AG04449 (cell line): ENCODE measurements at regions of chr6 and their contacts with region 1.

Region 1: GRCh38 chr6:113994918-113995342 is 24.0 kb upstream of the HDAC2 start:
- DNase-seq: peak; percentile 73
- H3K4me3 ChIP-seq: no peak overlapping the region
- CTCF ChIP-seq: peak; percentile 77

Region 2: DNA sequence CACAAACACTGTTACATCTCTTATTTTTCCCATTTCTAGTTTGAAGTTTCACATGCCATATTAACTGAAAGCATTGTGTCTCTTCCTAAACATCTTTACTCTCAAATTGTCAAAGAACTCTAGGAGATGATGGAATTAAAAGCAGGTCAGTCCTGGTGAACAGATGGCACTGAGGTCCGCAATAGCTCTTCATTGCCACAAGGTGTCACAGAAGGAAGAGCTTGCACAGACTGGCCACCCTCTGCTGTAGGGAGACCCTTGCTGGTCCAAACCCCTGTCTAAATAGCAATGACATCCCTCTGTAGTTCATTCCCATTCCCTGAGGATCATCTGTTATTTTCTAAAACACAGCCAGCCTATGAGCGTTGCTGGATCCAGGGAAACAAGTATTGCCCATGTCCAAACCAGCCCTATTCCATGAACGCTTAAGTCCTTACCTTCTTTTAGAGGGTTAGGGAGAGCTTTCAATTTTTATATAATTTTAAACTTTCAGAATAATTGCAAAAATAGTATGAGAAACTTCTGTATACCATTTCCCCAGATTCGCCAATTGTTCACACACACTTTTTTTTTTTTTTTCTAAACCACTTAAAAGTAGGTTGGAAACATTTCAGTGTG is 13.9 kb before region 1 on chr6:
- CTCF ChIA-PET with region 1: interaction called, 20 read pairs
- POLR2A ChIA-PET with region 1: no interaction called
- DNase-seq: no peak
- H3K4me3 ChIP-seq: no peak overlapping the region
- CTCF ChIP-seq: peak; percentile 35

Region 3: DNA sequence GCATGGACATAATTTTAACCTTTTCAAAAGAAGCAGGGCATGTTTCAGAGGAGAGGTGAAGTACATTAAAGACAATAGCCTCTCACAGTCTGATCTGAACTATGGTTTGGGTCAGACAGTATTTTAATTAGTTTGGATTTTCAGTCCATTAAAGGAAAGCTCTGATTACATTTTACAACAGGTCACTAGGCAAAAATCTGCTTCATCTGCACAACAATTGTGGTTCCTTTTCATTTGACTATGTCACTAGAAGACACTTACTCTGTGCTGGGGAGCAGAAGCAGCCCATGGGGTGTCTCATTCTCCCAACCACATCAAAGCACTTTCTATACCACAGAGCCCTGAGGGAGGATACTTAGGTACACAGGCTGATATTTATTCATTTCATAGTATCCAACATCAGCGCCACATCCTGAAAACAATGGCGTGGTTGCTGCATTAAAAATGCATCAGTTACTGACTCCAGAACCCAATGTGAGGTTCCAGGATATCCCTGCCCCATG is 12.6 kb after region 1 on chr6:
- CTCF ChIA-PET with region 1: interaction called, 11 read pairs
- POLR2A ChIA-PET with region 1: no interaction called
- DNase-seq: no peak
- H3K4me3 ChIP-seq: no peak overlapping the region
- CTCF ChIP-seq: no peak

Region 4: DNA sequence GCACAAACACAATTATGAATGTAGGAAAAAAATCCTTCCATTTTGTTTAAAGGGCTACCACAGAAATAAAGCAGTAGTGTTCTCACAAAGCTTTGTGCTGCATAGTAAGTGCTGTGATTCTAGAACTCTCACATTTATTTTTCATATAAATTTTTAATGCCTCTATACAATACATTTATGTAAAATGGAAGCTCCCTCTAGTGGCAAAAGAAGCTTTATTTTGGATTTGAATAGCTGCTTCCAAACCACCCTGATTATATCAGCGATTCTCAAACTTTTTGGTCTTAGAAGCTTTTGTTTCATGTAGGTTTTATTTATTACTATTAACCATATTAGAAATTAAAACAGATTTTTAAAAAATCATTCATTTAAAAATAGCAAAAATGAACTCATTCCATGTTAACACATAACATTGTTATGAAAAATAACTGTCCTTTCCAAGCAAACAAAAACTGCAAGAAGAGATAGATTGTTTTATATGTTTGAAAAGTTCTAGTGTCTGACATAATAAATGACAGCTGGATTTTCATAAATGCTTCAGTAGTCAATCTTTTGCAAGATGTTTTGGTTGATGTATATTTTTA is 309.5 kb after region 1 on chr6:
- CTCF ChIA-PET with region 1: interaction called, 134 read pairs
- POLR2A ChIA-PET with region 1: no interaction called
- DNase-seq: no peak
- H3K4me3 ChIP-seq: no peak overlapping the region
- CTCF ChIP-seq: peak; percentile 20